HEK293 (cell line): ENCODE measurements at regions of chr20 and their contacts with region 1.

Region 1: GRCh38 chr20:45373353-45374100 is 4.6 kb downstream of the TP53TG5 start:
- H3K4me3 ChIP-seq: peak overlapping the region; percentile 29
- H3K27ac ChIP-seq: no peak overlapping the region
- H3K4me1 ChIP-seq: no peaks in the 10 kb centered on the region
- CTCF ChIP-seq: peak; percentile 79

Region 2: DNA sequence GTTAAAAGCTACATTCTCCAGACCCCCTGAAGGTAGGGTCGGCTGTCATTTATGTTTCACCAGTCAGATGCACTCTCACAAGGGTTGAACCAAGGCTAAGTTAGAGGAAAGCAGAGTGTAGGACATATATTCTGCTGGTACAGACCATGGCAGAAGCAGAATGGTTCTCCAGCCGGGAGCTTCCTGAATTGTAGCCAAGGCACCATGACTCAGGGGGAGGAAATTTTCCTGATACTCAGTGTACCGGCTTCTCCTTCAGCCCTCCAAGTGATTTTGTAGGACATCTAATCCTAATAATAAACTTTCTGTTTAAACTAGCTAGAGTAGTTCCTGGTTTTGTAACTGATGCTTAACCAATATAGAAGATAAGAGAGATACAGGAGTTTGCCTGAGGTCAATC is 105.0 kb before region 1 on chr20:
- CTCF ChIA-PET with region 1: no interaction called
- POLR2A ChIA-PET with region 1: no interaction called
- H3K4me3 ChIP-seq: no peak overlapping the region
- H3K27ac ChIP-seq: no peak overlapping the region
- H3K4me1 ChIP-seq: no peaks in the 10 kb centered on the region
- CTCF ChIP-seq: no peak

Region 3: GRCh38 chr20:45354423-45355208 is 18.9 kb before region 1 on chr20:
- CTCF ChIA-PET with region 1: interaction called, 10 read pairs
- POLR2A ChIA-PET with region 1: no interaction called
- H3K4me3 ChIP-seq: no peak overlapping the region
- H3K27ac ChIP-seq: no peak overlapping the region
- H3K4me1 ChIP-seq: 0 out of 2 replicates have a peak, but pooled peaks cover 2% of the 10 kb centered on the region
- CTCF ChIP-seq: no peak

Region 4: DNA sequence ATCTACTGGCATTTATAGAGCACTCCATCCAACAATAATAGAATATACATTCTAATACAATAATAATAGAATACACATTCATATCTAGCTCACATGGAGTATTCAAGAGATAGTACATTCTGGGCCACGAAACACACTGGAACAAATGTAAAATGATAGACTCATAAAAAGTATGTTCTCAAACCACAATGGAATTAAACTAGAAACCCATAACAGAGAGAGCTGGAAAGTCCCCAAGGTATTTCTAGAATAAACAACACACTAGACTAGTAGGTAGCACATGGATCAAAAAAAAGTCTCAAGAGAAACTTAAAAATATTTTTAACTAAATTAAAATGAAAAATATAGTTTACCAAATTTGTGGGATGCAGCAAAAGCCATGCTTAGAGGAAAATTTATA is 13.7 kb after region 1 on chr20:
- CTCF ChIA-PET with region 1: interaction called, 25 read pairs
- POLR2A ChIA-PET with region 1: interaction called, 3 read pairs
- H3K4me3 ChIP-seq: no peak overlapping the region
- H3K27ac ChIP-seq: no peak overlapping the region
- H3K4me1 ChIP-seq: no peaks in the 10 kb centered on the region
- CTCF ChIP-seq: no peak

Region 5: DNA sequence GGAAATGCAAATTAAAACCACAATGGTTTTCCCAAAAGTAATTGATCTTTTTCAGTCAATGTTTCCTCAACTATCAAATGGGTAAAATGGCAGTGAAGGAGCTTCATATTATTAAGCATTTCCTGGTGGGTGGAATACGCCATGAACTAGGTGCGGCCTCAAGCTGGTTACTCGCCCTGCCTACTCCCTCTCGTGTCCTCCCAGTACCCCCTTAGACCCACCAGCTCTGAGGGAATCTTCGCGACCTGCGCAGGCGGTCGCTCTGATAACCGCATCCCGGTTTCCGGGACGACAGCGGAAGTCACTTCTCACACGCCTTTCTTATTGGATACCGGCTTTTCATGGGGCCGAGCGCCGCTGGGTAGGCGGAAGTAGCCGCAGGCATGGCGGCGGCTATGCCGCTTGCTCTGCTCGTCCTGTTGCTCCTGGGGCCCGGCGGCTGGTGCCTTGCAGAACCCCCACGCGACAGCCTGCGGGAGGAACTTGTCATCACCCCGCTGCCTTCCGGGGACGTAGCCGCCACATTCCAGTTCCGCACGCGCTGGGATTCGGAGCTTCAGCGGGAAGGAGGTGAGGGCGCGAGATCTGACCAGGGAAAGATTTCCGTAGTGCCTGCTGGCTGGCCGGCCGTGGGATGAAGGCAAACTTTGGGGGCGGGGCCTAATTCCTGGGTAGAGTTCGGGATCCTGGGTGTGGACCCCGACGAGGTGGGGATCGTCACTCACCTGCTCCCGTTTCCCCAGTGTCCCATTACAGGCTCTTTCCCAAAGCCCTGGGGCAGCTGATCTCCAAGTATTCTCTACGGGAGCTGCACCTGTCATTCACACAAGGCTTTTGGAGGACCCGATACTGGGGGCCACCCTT is 42.5 kb after region 1 on chr20 and contains the start of gene PIGT:
- CTCF ChIA-PET with region 1: interaction called, 13 read pairs
- POLR2A ChIA-PET with region 1: interaction called, 8 read pairs
- H3K4me3 ChIP-seq: peak within 1 kb of the TSS; percentile 95
- H3K27ac ChIP-seq: no peak within 1 kb of the TSS; the same call in 1 of the 2 replicates
- H3K4me1 ChIP-seq: no peaks in the 10 kb centered on the region; the same call in 1 of the 2 replicates
- CTCF ChIP-seq: no peak

Region 6: DNA sequence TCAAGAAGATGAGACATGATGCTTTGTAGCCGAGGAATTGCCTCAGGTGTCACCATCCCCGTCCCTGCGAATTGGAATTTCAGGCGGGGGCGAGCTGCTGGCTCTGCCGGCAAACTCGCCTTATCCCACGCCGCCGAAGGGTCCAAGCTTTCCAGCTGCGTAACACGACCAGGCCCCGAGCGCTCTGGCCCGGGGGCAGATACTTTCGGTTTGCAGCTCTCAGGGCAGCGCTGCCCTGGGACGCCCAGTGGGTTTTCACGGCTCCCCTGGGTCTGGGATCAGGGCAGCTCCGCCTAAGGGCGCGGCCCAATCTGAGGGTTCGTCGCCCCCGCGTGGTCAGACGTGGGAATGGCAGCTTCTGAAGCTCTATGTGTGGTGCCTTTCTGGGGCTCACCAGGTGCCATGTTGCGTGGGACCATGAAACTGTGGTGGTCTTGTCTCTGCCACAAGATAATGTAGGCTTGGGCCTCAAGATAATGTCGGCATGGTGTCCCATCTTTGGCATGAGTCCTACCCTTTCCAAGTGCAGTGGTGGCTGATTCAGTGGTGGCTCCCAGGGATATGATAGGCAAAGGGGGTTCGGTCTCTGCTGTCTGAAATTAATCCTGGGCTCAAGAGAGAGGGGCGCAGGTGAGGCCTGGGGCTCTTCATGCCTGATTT is 63.3 kb after region 1 on chr20:
- CTCF ChIA-PET with region 1: interaction called, 95 read pairs
- POLR2A ChIA-PET with region 1: interaction called, 7 read pairs
- H3K4me3 ChIP-seq: peak overlapping the region; percentile 59
- H3K27ac ChIP-seq: no peak overlapping the region
- H3K4me1 ChIP-seq: 0 out of 2 replicates have a peak, but pooled peaks cover 4% of the 10 kb centered on the region
- CTCF ChIP-seq: peak; percentile 97